ENCODE measurements at regions of chr9 and their contacts with region 1.

Region 1: GRCh38 chr9:69834056-69834455 is 13.4 kb downstream of the CFAP95 start:
- DNase-seq: no peak
- ATAC-seq: no peak
- H3K4me3 ChIP-seq: no peak overlapping the region
- H3K4me3 Mint-ChIP-seq: peak overlapping the region; percentile 21
- H3K27ac ChIP-seq: no peak overlapping the region
- H3K27ac Mint-ChIP-seq: peak overlapping the region; percentile 21
- H3K4me1 ChIP-seq: peaks cover 41% of the 10 kb centered on the region
- H3K4me1 Mint-ChIP-seq: peaks cover 38% of the 10 kb centered on the region
- H3K27me3 ChIP-seq: no peaks in the 10 kb centered on the region
- H3K27me3 Mint-ChIP-seq: no peaks in the 10 kb centered on the region
- CTCF ChIP-seq: no peak

Region 2: GRCh38 chr9:69820955-69821788 is 12.9 kb before region 1 on chr9:
- CTCF ChIA-PET with region 1: no interaction called
- POLR2A ChIA-PET with region 1: no interaction called
- intact Hi-C with region 1: loop called in 1 of 2 experiments (anchors 2 kb)
- DNase-seq: no peak
- ATAC-seq: no peak
- H3K4me3 ChIP-seq: peak overlapping the region; percentile 28 to 52
- H3K4me3 Mint-ChIP-seq: peak overlapping the region; percentile 75
- H3K27ac ChIP-seq: peak overlapping the region in 1 of 2 experiments; percentile 20
- H3K27ac Mint-ChIP-seq: no peak overlapping the region
- H3K4me1 ChIP-seq: peaks cover 3% of the 10 kb centered on the region
- H3K4me1 Mint-ChIP-seq: peaks cover 10% of the 10 kb centered on the region
- H3K27me3 ChIP-seq: no peaks in the 10 kb centered on the region
- H3K27me3 Mint-ChIP-seq: peaks cover 14% of the 10 kb centered on the region
- CTCF ChIP-seq: no peak

Region 3: GRCh38 chr9:70049236-70049635 is 215.2 kb after region 1 on chr9:
- CTCF ChIA-PET with region 1: no interaction called
- POLR2A ChIA-PET with region 1: no interaction called
- intact Hi-C with region 1: no loop called
- DNase-seq: no peak
- ATAC-seq: no peak
- H3K4me3 ChIP-seq: no peak overlapping the region
- H3K4me3 Mint-ChIP-seq: no peak overlapping the region
- H3K27ac ChIP-seq: no peak overlapping the region
- H3K27ac Mint-ChIP-seq: no peak overlapping the region
- H3K4me1 ChIP-seq: no peaks in the 10 kb centered on the region
- H3K4me1 Mint-ChIP-seq: peaks cover 6% of the 10 kb centered on the region
- H3K27me3 ChIP-seq: peaks cover 0 to 3% of the 10 kb centered on the region in 2 experiments
- H3K27me3 Mint-ChIP-seq: peaks cover 37% of the 10 kb centered on the region
- CTCF ChIP-seq: no peak

Region 4: GRCh38 chr9:70085241-70085640 is 251.2 kb after region 1 on chr9:
- CTCF ChIA-PET with region 1: no interaction called
- POLR2A ChIA-PET with region 1: no interaction called
- intact Hi-C with region 1: no loop called
- DNase-seq: no peak
- ATAC-seq: no peak
- H3K4me3 ChIP-seq: no peak overlapping the region
- H3K4me3 Mint-ChIP-seq: no peak overlapping the region
- H3K27ac ChIP-seq: no peak overlapping the region
- H3K27ac Mint-ChIP-seq: no peak overlapping the region
- H3K4me1 ChIP-seq: no peaks in the 10 kb centered on the region
- H3K4me1 Mint-ChIP-seq: no peaks in the 10 kb centered on the region
- H3K27me3 ChIP-seq: peaks cover 0 to 2% of the 10 kb centered on the region in 2 experiments
- H3K27me3 Mint-ChIP-seq: peaks cover 22% of the 10 kb centered on the region
- CTCF ChIP-seq: no peak

Measured in CD8-positive, alpha-beta T cell (primary cell).